ENCODE measurements at regions of chr3 and their contacts with region 1.

Region 1: DNA sequence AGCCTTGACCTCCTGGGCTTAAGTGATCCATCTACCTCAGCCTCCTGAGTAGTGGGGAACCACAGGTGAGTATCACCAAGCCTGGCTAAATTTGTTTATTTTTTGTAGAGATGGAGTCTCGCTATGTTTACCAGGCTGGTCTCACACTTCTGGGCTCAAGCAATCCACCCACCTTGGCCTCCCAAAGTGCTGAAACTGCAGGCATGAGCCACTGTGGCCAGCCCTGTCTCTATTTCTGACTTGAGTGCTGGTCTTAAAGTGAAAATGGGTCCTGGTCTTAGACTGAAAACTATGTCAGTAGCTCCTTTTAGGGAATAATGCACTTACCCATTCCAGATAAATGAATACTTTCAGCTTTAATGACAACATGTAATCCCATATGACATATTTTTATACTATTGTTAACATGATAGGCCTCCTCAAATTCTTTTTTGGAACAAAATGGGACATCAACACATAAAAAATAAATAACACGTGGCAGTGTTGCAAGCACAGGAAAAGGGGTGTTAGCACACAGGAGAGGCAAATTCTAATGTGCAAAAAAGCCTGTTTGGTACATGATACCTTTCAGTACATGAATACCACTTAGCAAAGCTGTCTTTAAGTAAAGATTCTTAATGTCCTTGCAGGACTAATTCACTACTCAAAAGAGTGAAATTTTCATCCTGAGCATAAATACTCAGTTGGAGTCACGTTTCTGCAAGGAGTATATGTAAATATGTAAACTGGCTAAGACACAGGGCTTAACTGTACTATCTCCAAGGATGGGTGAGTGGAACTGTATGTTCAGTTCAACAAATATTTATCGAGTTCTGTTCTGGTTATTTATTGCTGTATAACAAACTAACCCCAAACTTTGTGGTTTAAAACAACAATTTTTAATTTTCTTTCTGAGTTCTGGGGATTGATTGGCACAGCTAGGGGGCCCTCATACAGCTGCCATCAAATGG is 194.7 kb downstream of the NR1D2 start:
- DNase-seq: peak; percentile 37
- H3K4me3 ChIP-seq: no peak overlapping the region
- H3K27ac ChIP-seq: peak overlapping the region; percentile 47 to 68
- H3K4me1 ChIP-seq: peaks cover 16% of the 10 kb centered on the region
- H3K27me3 ChIP-seq: no peaks in the 10 kb centered on the region
- CTCF ChIP-seq: no peak
- POLR2A ChIP-seq: no peak

Region 2: GRCh38 chr3:23659274-23659673 is 480.5 kb before region 1 on chr3:
- intact Hi-C with region 1: no loop called
- DNase-seq: no peak
- H3K4me3 ChIP-seq: no peak overlapping the region
- H3K27ac ChIP-seq: no peak overlapping the region
- H3K4me1 ChIP-seq: no peaks in the 10 kb centered on the region
- H3K27me3 ChIP-seq: no peaks in the 10 kb centered on the region
- CTCF ChIP-seq: no peak
- POLR2A ChIP-seq: no peak

Region 3: GRCh38 chr3:24047513-24047912 is 92.2 kb before region 1 on chr3:
- intact Hi-C with region 1: loop called (anchors 5 kb)
- DNase-seq: no peak
- H3K4me3 ChIP-seq: no peak overlapping the region
- H3K27ac ChIP-seq: no peak overlapping the region
- H3K4me1 ChIP-seq: no peaks in the 10 kb centered on the region
- H3K27me3 ChIP-seq: no peaks in the 10 kb centered on the region
- CTCF ChIP-seq: no peak
- POLR2A ChIP-seq: no peak

Region 4: DNA sequence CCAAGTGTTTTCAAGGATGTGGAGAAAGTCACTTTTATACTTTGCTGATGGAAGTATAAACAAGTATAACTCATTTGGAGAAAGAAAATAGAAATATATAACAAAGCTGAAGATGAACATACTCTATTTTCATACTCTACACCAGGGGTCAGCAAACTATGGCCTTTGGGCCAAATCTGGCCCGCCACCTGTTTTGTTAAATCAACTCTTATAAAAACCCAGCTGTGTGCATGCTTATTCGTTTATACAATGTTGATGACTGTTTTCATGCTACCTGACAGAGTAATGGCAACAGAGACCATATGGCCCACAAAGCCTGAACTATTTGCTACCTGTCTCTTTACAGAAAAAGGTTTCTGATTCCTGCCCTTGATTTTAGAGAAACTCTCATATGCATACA is 70.7 kb before region 1 on chr3:
- intact Hi-C with region 1: no loop called
- DNase-seq: no peak
- H3K4me3 ChIP-seq: no peak overlapping the region
- H3K27ac ChIP-seq: no peak overlapping the region
- H3K4me1 ChIP-seq: no peaks in the 10 kb centered on the region
- H3K27me3 ChIP-seq: no peaks in the 10 kb centered on the region
- CTCF ChIP-seq: peak in 2 of 4 experiments; percentile 33 to 39
- POLR2A ChIP-seq: no peak

Region 5: GRCh38 chr3:24548278-24548677 is 408.5 kb after region 1 on chr3:
- intact Hi-C with region 1: no loop called
- DNase-seq: no peak
- H3K4me3 ChIP-seq: no peak overlapping the region
- H3K27ac ChIP-seq: no peak overlapping the region
- H3K4me1 ChIP-seq: no peaks in the 10 kb centered on the region
- H3K27me3 ChIP-seq: no peaks in the 10 kb centered on the region
- CTCF ChIP-seq: no peak
- POLR2A ChIP-seq: no peak

Measured in prostate gland (tissue), 2 donors.